ENCODE measurements at regions of chr12 and their contacts with region 1.

Region 1: DNA sequence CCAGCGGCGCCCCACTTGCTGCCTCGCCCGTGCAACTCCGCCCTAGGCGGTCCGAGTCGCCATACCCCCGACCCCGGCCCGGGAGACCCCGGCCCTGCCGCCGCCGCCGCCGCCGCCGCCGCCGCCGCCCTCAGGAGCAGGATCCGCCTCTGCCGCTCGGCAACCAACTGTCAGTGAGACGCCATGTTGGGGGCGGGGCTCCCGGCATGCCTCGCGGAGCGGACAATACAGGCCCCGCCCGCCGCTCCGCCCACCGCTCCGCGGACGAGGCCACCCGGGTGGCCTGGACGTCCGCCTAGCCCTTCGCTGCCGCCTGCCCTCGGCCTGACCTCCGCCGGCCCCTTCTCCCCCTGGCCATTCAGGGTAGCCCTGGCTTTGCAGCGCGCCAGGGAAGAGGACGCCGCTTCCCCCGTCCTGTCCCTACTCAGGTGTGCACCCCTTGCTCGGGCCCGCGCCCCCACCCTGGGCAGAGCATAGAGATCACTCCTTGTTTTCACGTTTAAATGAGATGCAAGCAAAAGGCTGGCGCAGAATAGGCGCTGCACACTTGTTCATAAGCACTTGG is at the start of gene HECTD4:
- DNase-seq: peak; percentile 98
- ATAC-seq: peak; percentile 90
- H3K4me3 ChIP-seq: peak within 1 kb of the TSS; percentile 90
- H3K27ac ChIP-seq: peak within 1 kb of the TSS; percentile 3; the same call in 1 of the 2 replicates
- H3K4me1 ChIP-seq: peaks cover 17% of the 10 kb centered on the region
- H3K27me3 ChIP-seq: no peaks in the 10 kb centered on the region
- CTCF ChIP-seq: no peak
- total RNA-seq, gene HECTD4: 24.6 and 31.2 TPM in 2 replicates

Region 2: GRCh38 chr12:112012775-112013600 is 369.3 kb before region 1 on chr12 and contains the starts of genes ERP29 and TMEM116:
- CTCF ChIA-PET with region 1: no interaction called
- POLR2A ChIA-PET with region 1: no interaction called
- intact Hi-C with region 1: loop called (anchors 10 kb)
- DNase-seq: peak; percentile 99
- ATAC-seq: peak; percentile 79
- H3K4me3 ChIP-seq: peak within 1 kb of the TSS; percentile 92
- H3K27ac ChIP-seq: peak within 1 kb of the TSS; percentile 86
- H3K4me1 ChIP-seq: peaks cover 36% of the 10 kb centered on the region
- H3K27me3 ChIP-seq: no peaks in the 10 kb centered on the region
- CTCF ChIP-seq: peak; percentile 48
- total RNA-seq, gene ERP29: 90.2 and 97.2 TPM in 2 replicates
- total RNA-seq, gene TMEM116: 4.4 and 5.6 TPM in 2 replicates

Region 3: GRCh38 chr12:112198120-112198733 is 184.1 kb before region 1 on chr12:
- CTCF ChIA-PET with region 1: interaction called, 31 read pairs
- POLR2A ChIA-PET with region 1: no interaction called
- intact Hi-C with region 1: loop called (anchors 1 kb)
- DNase-seq: peak; percentile 82
- ATAC-seq: peak; percentile 99
- H3K4me3 ChIP-seq: no peak overlapping the region
- H3K27ac ChIP-seq: no peak overlapping the region
- H3K4me1 ChIP-seq: no peaks in the 10 kb centered on the region
- H3K27me3 ChIP-seq: no peaks in the 10 kb centered on the region
- CTCF ChIP-seq: peak; percentile 90

Region 4: DNA sequence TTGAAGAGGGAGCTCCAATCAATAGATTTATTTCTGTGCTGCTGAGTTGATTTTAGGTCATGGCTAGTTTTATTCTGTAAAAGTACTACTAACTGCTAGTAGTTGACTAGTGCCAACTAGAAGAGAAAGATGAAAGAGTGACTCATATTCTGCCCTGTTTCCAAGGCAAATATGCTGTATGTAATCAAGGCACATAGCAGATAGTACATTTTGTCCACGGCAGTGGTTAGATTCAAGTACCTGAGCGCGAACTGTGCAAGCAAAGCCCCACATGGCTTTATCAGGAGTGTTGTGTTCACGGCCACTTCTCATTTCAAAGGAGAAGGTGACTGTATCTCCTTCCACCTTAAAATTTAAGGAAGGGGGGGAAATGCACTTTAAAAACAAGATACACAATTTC is 130.1 kb before region 1 on chr12:
- CTCF ChIA-PET with region 1: no interaction called
- POLR2A ChIA-PET with region 1: no interaction called
- intact Hi-C with region 1: loop called (anchors 1 kb)
- DNase-seq: peak; percentile 58
- ATAC-seq: peak; percentile 100
- H3K4me3 ChIP-seq: no peak overlapping the region
- H3K27ac ChIP-seq: no peak overlapping the region
- H3K4me1 ChIP-seq: no peaks in the 10 kb centered on the region; the same call in 1 of the 2 replicates
- H3K27me3 ChIP-seq: no peaks in the 10 kb centered on the region
- CTCF ChIP-seq: no peak

Region 5: GRCh38 chr12:112294793-112295192 is 87.5 kb before region 1 on chr12:
- CTCF ChIA-PET with region 1: interaction called, 12 read pairs
- POLR2A ChIA-PET with region 1: no interaction called
- intact Hi-C with region 1: loop called (anchors 1 kb)
- DNase-seq: peak; percentile 40
- ATAC-seq: peak; percentile 54; the same call in 1 of the 2 replicates
- H3K4me3 ChIP-seq: no peak overlapping the region
- H3K27ac ChIP-seq: no peak overlapping the region
- H3K4me1 ChIP-seq: no peaks in the 10 kb centered on the region
- H3K27me3 ChIP-seq: no peaks in the 10 kb centered on the region
- CTCF ChIP-seq: peak; percentile 64

Region 6: GRCh38 chr12:112341046-112341825 is 41.1 kb before region 1 on chr12:
- CTCF ChIA-PET with region 1: no interaction called
- POLR2A ChIA-PET with region 1: no interaction called
- intact Hi-C with region 1: loop called (anchors 2 kb)
- DNase-seq: peak; percentile 94
- ATAC-seq: peak; percentile 96
- H3K4me3 ChIP-seq: peak overlapping the region; percentile 3; the same call in 1 of the 2 replicates
- H3K27ac ChIP-seq: peak overlapping the region; percentile 9
- H3K4me1 ChIP-seq: peaks cover 26% of the 10 kb centered on the region
- H3K27me3 ChIP-seq: no peaks in the 10 kb centered on the region
- CTCF ChIP-seq: no peak

Measured in PC-3 (cell line).